Brain microvascular endothelial cell (primary cell): ENCODE measurements at regions of chr7 and their contacts with region 1.

Region 1: GRCh38 chr7:100837099-100837836 is 9.9 kb upstream of the EPHB4 start:
- DNase-seq: peak; percentile 88
- H3K4me3 ChIP-seq: peak overlapping the region; percentile 47
- H3K27ac ChIP-seq: peak overlapping the region; percentile 47
- H3K27me3 ChIP-seq: no peaks in the 10 kb centered on the region
- CTCF ChIP-seq: no peak

Region 2: GRCh38 chr7:100119062-100119700 is 718.1 kb before region 1 on chr7 and contains the starts of genes CNPY4 and TAF6:
- in situ Hi-C with region 1: no loop called
- DNase-seq: peak; percentile 92
- H3K4me3 ChIP-seq: peak within 1 kb of the TSS; percentile 91
- H3K27ac ChIP-seq: peak within 1 kb of the TSS; percentile 98
- H3K27me3 ChIP-seq: no peaks in the 10 kb centered on the region
- CTCF ChIP-seq: no peak

Region 3: GRCh38 chr7:100705753-100706671 is 131.3 kb before region 1 on chr7 and contains the start of gene POP7:
- in situ Hi-C with region 1: loop called (anchors 25 kb)
- DNase-seq: peak; percentile 97
- H3K4me3 ChIP-seq: peak within 1 kb of the TSS; percentile 94
- H3K27ac ChIP-seq: peak within 1 kb of the TSS; percentile 59
- H3K27me3 ChIP-seq: no peaks in the 10 kb centered on the region
- CTCF ChIP-seq: no peak

Region 4: DNA sequence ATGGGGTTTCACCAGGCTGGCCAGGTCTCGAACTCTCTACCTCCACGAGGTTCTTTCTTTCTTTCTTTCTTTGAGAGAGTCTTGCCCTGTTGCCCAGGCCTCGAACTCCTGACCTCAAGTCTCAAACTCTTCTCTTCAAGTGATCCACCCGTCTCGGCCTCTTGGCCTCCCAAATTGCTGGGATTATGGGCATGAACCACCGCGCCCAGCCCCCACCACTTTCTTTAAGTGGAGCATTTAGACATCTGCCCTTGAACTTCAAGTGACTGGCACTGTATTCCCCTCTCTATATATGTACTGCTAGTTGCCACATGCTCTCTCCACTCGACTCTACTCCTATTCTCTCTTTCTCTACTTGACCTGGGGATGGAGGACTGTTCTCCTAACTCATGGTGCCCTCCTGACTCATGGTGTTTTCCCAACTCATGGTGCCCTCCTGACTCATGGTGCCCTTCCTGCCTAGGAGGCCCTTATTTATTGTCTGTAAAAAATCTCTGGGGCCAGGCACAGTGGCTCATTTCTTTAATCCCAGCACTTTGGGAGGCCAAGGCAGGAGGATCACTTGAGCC is 77.7 kb after region 1 on chr7:
- in situ Hi-C with region 1: no loop called
- DNase-seq: no peak
- H3K4me3 ChIP-seq: no peak overlapping the region
- H3K27ac ChIP-seq: no peak overlapping the region
- H3K27me3 ChIP-seq: no peaks in the 10 kb centered on the region
- CTCF ChIP-seq: no peak